ENCODE measurements at regions of chr22 and their contacts with region 1.

Region 1: GRCh38 chr22:45553351-45554039 is 50.8 kb downstream of the FBLN1 start:
- DNase-seq: peak; percentile 83
- H3K4me3 Mint-ChIP-seq: no peak overlapping the region
- H3K27ac Mint-ChIP-seq: no peak overlapping the region
- H3K4me1 Mint-ChIP-seq: no peaks in the 10 kb centered on the region
- H3K27me3 Mint-ChIP-seq: peaks cover 2% of the 10 kb centered on the region

Region 2: GRCh38 chr22:45441138-45441537 is 112.4 kb before region 1 on chr22:
- intact Hi-C with region 1: loop called (anchors 10 kb)
- DNase-seq: peak; percentile 77
- H3K4me3 Mint-ChIP-seq: peak overlapping the region; percentile 74
- H3K27ac Mint-ChIP-seq: no peak overlapping the region
- H3K4me1 Mint-ChIP-seq: peaks cover 10% of the 10 kb centered on the region
- H3K27me3 Mint-ChIP-seq: peaks cover 3% of the 10 kb centered on the region